Activated naive CD8-positive, alpha-beta T cell treated with anti-CD3 and anti-CD28 coated beads, Interleukin-2, amount 10 ng/mL, durations not matched to agents 7 days and 5 days (primary cell): ENCODE measurements at regions of chr5 and their contacts with region 1.

Region 1: GRCh38 chr5:14595189-14595588 is 13.6 kb downstream of the OTULINL start:
- DNase-seq: no peak
- ATAC-seq: peak; percentile 78
- H3K4me3 Mint-ChIP-seq: peak overlapping the region; percentile 85
- H3K27ac Mint-ChIP-seq: peak overlapping the region; percentile 97
- H3K4me1 Mint-ChIP-seq: peaks cover 82% of the 10 kb centered on the region
- H3K27me3 Mint-ChIP-seq: no peaks in the 10 kb centered on the region

Region 2: GRCh38 chr5:14364576-14365472 is 230.4 kb before region 1 on chr5:
- POLR2A ChIA-PET with region 1: interaction called, 12 read pairs
- DNase-seq: no peak
- ATAC-seq: no peak
- H3K4me3 Mint-ChIP-seq: peak overlapping the region; percentile 56
- H3K27ac Mint-ChIP-seq: peak overlapping the region; percentile 89
- H3K4me1 Mint-ChIP-seq: peaks cover 52% of the 10 kb centered on the region
- H3K27me3 Mint-ChIP-seq: peaks cover 2% of the 10 kb centered on the region

Region 3: DNA sequence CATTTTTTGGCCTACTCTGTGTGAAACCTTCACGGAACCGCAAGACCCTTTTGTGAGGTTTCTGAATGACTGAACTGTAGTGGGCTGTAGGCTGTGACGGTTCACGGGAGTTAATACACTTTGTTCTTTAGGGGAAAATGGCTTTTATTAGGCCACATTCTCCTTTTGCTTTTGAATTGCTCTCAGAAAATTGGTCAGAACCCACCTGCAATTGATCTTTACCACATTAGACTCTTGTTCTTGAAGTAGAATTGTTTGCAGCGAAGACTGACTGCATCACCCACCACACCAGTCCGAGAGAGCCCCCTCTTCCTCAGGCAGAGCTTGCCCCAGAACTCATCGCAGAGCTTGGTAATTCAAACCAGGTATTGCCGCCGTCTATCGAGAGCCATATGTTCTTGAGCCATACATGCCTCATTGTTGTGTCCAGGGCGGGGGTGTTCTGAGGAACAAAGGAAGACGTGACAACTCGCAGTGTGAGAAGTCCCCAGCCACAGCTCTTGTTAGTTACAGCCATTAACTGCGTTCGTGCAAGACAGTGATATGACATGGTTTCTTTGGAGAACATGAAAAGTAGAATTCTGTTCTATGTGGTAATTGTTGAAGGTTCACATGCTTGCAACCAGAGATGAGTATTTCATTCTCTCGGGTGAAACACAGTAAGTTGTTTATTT is 180.0 kb before region 1 on chr5:
- POLR2A ChIA-PET with region 1: interaction called, 17 read pairs
- DNase-seq: peak; percentile 50
- ATAC-seq: peak; percentile 58
- H3K4me3 Mint-ChIP-seq: peak overlapping the region; percentile 82
- H3K27ac Mint-ChIP-seq: peak overlapping the region; percentile 98
- H3K4me1 Mint-ChIP-seq: peaks cover 47% of the 10 kb centered on the region
- H3K27me3 Mint-ChIP-seq: no peaks in the 10 kb centered on the region